Endothelial cell of umbilical vein (primary cell): ENCODE measurements at regions of chr9 and their contacts with region 1.

Region 1: DNA sequence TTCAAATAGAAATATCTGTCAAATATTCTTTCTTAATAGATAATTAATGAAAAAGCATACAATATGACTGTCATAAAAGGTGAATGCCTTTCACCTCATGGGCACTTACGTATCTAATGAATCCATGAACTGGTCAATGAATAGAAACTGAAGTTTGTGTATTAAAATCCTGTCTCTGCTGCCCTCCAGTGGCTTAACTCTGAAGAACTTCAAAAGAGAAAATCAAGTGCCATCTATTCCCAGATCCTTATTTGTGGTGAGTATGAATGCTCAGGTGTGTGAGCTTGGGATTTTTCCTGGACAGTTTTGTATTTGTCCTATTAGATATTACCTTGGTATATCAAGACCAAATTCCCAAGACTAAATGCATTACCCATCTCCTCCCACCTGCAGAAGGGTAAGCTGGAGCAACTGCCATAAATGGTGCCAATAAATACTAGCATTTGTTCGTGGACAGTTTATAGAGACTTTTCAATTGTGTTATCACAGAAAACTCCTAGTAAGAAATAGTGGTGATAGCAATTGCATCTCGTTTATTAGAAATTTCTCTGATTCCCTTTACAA is 44.0 kb upstream of the SVEP1 start:
- DNase-seq: peak; percentile 75
- H3K4me3 ChIP-seq: no peak overlapping the region
- H3K27ac ChIP-seq: no peak overlapping the region
- H3K4me1 ChIP-seq: no peaks in the 10 kb centered on the region
- H3K27me3 ChIP-seq: no peaks in the 10 kb centered on the region
- CTCF ChIP-seq: peak; percentile 41 to 46
- POLR2A ChIP-seq: no peak

Region 2: GRCh38 chr9:109574068-109574882 is 1049.3 kb before region 1 on chr9:
- CTCF ChIA-PET with region 1: interaction called, 21 read pairs
- POLR2A ChIA-PET with region 1: no interaction called
- dilution Hi-C with region 1: no loop called
- intact Hi-C with region 1: loop called (anchors 1 kb)
- DNase-seq: peak; percentile 52
- H3K4me3 ChIP-seq: no peak overlapping the region
- H3K27ac ChIP-seq: no peak overlapping the region
- H3K4me1 ChIP-seq: no peaks in the 10 kb centered on the region
- H3K27me3 ChIP-seq: no peaks in the 10 kb centered on the region
- CTCF ChIP-seq: peak; percentile 37 to 47
- POLR2A ChIP-seq: no peak

Region 3: GRCh38 chr9:110183208-110184145 is 440.1 kb before region 1 on chr9:
- CTCF ChIA-PET with region 1: interaction called, 52 read pairs
- POLR2A ChIA-PET with region 1: no interaction called
- dilution Hi-C with region 1: no loop called
- intact Hi-C with region 1: loop called (anchors 1 kb)
- DNase-seq: peak; percentile 74
- H3K4me3 ChIP-seq: no peak overlapping the region
- H3K27ac ChIP-seq: no peak overlapping the region
- H3K4me1 ChIP-seq: peaks cover 4% of the 10 kb centered on the region
- H3K27me3 ChIP-seq: peaks cover 5% of the 10 kb centered on the region in 2 experiments
- CTCF ChIP-seq: peak; percentile 62 to 68
- POLR2A ChIP-seq: no peak

Region 4: DNA sequence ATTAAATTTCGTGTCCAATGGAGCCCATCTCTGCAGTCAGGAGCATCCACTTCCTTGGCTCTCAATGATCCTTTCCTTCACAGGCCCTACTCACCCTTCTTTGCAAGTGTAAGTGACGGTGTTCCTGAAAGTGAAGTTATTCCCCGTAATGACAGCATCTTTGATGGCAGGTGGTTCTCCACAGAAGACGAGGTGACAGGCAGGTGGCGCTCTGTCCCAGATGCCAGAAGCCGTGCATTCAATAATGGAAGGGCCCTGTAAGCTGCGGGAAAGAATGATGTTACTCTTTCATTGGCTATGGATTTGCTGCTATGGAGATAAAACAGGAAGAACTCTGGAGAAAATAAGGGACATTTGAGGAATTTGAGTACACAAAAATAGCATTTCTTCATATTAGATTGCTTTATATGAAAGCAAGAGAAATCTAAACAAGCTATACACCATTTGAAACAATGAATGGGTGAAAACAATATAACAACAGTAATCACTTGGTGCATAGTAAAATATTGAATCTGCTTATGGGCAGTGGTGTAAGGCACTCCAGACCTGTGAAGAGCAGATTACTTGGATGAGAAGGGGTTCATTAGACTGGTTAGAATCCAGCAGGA is 195.9 kb before region 1 on chr9:
- CTCF ChIA-PET with region 1: interaction called, 105 read pairs
- POLR2A ChIA-PET with region 1: no interaction called
- dilution Hi-C with region 1: no loop called
- intact Hi-C with region 1: loop called (anchors 1 kb)
- DNase-seq: peak; percentile 46
- H3K4me3 ChIP-seq: no peak overlapping the region
- H3K27ac ChIP-seq: no peak overlapping the region
- H3K4me1 ChIP-seq: no peaks in the 10 kb centered on the region
- H3K27me3 ChIP-seq: no peaks in the 10 kb centered on the region
- CTCF ChIP-seq: peak; percentile 60 to 75
- POLR2A ChIP-seq: no peak

Region 5: GRCh38 chr9:110638381-110638954 is 14.9 kb after region 1 on chr9:
- CTCF ChIA-PET with region 1: interaction called, 10 read pairs
- POLR2A ChIA-PET with region 1: no interaction called
- dilution Hi-C with region 1: no loop called
- intact Hi-C with region 1: no loop called
- DNase-seq: peak; percentile 50
- H3K4me3 ChIP-seq: no peak overlapping the region
- H3K27ac ChIP-seq: no peak overlapping the region
- H3K4me1 ChIP-seq: no peaks in the 10 kb centered on the region
- H3K27me3 ChIP-seq: no peaks in the 10 kb centered on the region
- CTCF ChIP-seq: peak; percentile 9 to 17
- POLR2A ChIP-seq: no peak